Activated naive CD8-positive, alpha-beta T cell treated with anti-CD3 and anti-CD28 coated beads, Interleukin-2, amount 10 ng/mL, durations not matched to agents 7 days and 5 days (primary cell): ENCODE measurements at regions of chr12 and their contacts with region 1.

Region 1: DNA sequence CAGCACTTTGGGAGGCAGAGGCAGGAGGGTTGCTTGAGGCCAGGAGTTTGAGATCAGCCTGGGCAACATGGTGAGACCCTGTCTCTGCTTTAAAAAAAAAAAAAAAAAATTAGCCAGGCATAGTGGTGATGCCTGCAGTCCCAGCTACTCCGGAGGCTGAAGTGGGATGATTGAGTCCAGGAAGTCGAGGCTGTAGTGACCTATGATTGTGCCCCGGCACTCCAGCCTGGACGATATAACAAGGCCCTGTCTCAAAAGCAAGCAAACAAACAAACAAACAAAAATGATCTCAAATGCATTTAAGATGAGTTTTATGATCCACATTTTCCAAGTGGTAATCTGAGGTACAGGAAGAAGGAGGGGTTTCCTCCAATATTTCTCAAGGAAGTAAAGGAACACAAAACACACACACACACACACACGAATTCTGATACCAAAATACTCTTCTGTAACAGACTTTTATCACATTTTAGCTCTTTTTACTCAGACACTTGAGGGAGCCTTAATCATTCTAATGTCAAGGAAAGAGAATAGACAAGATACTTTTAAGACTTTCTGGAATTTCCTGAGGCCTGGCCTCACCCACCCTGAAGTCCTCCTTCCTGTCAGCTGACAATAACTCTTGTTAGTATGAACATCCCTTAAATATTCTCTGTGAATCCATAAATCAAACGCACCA is 44.4 kb upstream of the CERS5 start:
- DNase-seq: no peak
- ATAC-seq: peak; percentile 47
- H3K4me3 Mint-ChIP-seq: peak overlapping the region; percentile 68
- H3K27ac Mint-ChIP-seq: peak overlapping the region; percentile 84
- H3K4me1 Mint-ChIP-seq: peaks cover 18% of the 10 kb centered on the region
- H3K27me3 Mint-ChIP-seq: no peaks in the 10 kb centered on the region

Region 2: DNA sequence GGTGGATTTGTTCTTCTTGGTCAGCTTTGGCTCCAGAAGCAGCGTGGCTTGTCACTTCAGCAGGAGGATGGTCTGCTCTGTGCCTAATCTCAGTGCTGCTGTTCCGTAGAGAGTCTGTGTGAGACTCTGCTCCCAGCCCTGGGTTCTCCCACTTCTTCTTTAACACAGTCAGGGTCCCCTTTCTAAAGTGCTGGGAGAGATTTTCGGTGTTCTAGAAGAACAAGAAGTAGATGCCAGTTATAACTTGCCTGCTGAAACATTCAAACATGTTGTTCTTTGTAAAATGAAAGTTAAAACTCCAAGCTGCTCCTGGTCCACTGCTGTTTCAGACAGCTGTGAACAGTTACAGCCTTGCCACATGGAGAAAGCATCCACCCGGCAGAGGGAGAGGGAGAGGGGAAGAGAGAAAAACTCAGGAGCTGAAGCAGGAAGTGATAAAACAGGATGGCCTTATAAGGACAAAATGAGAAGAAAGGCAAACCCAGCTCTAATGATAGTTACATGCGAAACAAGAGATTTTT is 10.8 kb after region 1 on chr12:
- POLR2A ChIA-PET with region 1: interaction called, 20 read pairs
- DNase-seq: no peak
- ATAC-seq: peak; percentile 40
- H3K4me3 Mint-ChIP-seq: no peak overlapping the region
- H3K27ac Mint-ChIP-seq: no peak overlapping the region
- H3K4me1 Mint-ChIP-seq: peaks cover 20% of the 10 kb centered on the region
- H3K27me3 Mint-ChIP-seq: no peaks in the 10 kb centered on the region